Activated naive CD4-positive, alpha-beta T cell treated with anti-CD3 and anti-CD28 coated beads, Interleukin-2, amount 10 ng/mL, durations not matched to agents 7 days and 5 days (primary cell): ENCODE measurements at regions of chr5 and their contacts with region 1.

Region 1: DNA sequence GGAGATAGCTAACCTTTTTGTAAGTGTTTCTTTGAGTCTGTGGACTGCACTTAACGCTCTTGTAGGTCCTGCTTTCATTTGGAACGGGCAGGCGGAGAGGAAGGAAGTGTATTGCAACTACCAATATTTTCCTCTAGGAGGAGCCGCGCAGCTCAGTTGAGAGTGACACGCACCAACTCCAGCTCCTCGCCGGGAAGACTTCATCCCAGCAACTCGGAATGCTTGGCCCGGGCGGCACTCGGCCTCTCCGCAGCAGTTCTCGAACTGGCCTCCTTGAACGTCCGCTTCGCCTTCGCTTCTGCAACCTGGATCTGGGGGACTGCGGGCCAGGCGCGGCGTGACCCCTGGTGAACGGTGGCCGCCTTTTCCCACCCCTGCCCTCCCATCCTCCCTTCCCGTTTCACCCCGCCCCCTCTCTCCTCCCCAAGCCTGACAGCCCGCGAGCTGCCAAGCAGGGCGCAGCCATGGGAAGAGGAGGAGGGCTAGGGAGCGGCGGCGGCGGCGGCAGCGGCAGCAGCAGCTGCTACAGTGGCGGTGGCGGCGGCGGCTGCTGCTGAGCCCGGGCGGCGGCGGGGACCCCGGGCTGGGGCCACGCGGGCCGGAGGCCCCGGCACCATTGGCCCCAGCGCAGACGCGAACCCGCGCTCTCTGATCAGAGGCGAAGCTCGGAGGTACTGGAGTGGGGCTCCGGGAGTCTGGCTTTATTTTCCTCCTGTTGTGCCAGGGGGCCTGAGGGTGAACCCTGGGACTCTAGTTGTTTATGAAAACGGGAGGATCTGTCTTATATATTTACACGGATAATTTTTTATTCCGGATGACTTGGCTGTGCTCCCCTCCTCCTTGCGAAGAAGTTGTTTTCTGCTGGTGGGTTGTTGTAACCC is at the start of gene GHR:
- DNase-seq: peak; percentile 38
- H3K4me3 Mint-ChIP-seq: no peak within 1 kb of the TSS
- H3K27ac Mint-ChIP-seq: no peak within 1 kb of the TSS
- H3K4me1 Mint-ChIP-seq: no peaks in the 10 kb centered on the region
- H3K27me3 Mint-ChIP-seq: peaks cover 18% of the 10 kb centered on the region

Region 2: GRCh38 chr5:42216904-42217303 is 206.6 kb before region 1 on chr5:
- CTCF ChIA-PET with region 1: no interaction called
- DNase-seq: no peak
- H3K4me3 Mint-ChIP-seq: no peak overlapping the region
- H3K27ac Mint-ChIP-seq: no peak overlapping the region
- H3K4me1 Mint-ChIP-seq: no peaks in the 10 kb centered on the region
- H3K27me3 Mint-ChIP-seq: no peaks in the 10 kb centered on the region

Region 3: DNA sequence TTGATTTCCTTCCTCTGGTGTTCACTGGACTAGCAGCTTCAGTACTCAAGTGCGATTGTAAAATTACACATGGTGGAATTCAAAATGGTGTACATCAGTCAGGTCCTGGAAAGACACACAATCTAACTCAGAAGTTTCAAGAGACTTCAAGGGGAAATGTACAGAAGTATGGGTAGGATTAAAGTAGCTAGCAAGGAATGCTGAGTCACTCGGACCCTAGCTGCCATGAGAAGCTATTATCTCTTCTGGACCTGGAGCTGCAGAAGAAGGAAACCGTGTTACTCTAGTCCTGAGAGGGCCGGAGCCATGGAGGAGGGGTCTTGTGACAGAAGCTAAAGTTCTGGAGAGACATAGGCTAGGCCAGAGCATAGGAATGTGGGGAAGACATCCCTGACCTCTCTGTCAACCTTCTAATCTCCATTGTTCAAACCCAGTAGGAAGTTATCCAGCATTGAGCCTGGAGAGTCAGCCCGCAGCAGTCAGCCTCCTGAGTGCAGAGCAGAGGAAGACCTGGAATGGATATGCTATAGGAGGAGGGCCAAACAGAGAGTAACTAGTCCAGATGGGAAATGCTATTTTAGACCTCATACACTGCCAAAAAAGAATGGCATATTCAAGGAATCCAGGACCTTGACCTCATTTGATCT is 84.0 kb after region 1 on chr5:
- CTCF ChIA-PET with region 1: no interaction called
- DNase-seq: no peak
- H3K4me3 Mint-ChIP-seq: no peak overlapping the region
- H3K27ac Mint-ChIP-seq: no peak overlapping the region
- H3K4me1 Mint-ChIP-seq: no peaks in the 10 kb centered on the region
- H3K27me3 Mint-ChIP-seq: no peaks in the 10 kb centered on the region

Region 4: GRCh38 chr5:42767491-42768105 is 344.1 kb after region 1 on chr5:
- CTCF ChIA-PET with region 1: interaction called, 10 read pairs
- DNase-seq: no peak
- H3K4me3 Mint-ChIP-seq: no peak overlapping the region
- H3K27ac Mint-ChIP-seq: no peak overlapping the region
- H3K4me1 Mint-ChIP-seq: no peaks in the 10 kb centered on the region
- H3K27me3 Mint-ChIP-seq: peaks cover under 1% of the 10 kb centered on the region

Region 5: GRCh38 chr5:42889311-42889933 is 465.9 kb after region 1 on chr5:
- CTCF ChIA-PET with region 1: interaction called, 10 read pairs
- DNase-seq: peak; percentile 81
- H3K4me3 Mint-ChIP-seq: no peak overlapping the region
- H3K27ac Mint-ChIP-seq: peak overlapping the region; percentile 12
- H3K4me1 Mint-ChIP-seq: no peaks in the 10 kb centered on the region
- H3K27me3 Mint-ChIP-seq: peaks cover 26% of the 10 kb centered on the region